ENCODE measurements at regions of chr12 and their contacts with region 1.

Region 1: GRCh38 chr12:6554168-6555017 is 1.4 kb downstream of the IFFO1 start:
- DNase-seq: peak; percentile 87
- H3K4me3 ChIP-seq: peak overlapping the region; percentile 93
- H3K27ac ChIP-seq: peak overlapping the region; percentile 66
- H3K4me1 ChIP-seq: peaks cover 41% of the 10 kb centered on the region
- H3K27me3 ChIP-seq: no peaks in the 10 kb centered on the region
- CTCF ChIP-seq: peak; percentile 67

Region 2: DNA sequence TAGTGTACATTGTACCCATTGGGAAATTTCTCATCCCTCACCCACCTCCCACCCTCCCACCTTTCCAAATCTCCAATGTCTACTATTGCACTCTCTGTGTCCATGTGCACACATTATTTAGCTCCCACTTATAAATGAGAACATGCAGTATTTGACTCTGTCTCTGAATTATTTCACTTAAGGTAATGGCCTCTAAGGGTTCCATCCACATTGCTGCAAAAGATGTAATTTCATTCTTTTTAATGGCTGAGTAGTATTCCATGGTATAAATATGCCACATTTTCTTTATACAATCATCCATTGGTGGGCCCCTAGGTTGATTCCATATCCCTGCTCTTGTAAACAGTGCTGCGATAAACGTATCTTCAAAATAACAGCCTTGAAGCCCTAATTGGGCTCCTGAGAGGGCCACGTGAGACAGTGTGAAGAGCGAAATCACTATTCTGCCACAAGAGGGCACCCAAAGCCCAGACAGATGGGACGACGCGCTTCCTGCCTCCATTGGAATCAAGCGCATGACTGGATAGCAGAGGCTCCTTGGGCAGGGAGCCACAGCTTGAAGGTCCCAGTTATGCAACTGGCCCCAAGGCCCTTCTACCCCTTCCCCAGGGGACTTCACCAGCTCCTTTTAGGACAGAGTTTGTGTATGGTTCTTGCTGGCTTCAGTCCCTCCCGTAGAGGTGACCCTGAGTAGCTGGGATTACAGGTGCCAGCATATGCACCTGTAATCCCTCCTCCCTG is 131.0 kb before region 1 on chr12:
- CTCF ChIA-PET with region 1: interaction called, 4 read pairs
- POLR2A ChIA-PET with region 1: no interaction called
- intact Hi-C with region 1: loop called (anchors 2 kb)
- DNase-seq: peak; percentile 96
- H3K4me3 ChIP-seq: no peak overlapping the region
- H3K27ac ChIP-seq: no peak overlapping the region
- H3K4me1 ChIP-seq: no peaks in the 10 kb centered on the region
- H3K27me3 ChIP-seq: no peaks in the 10 kb centered on the region
- CTCF ChIP-seq: peak; percentile 89

Region 3: GRCh38 chr12:6567112-6567670 is 12.8 kb after region 1 on chr12:
- CTCF ChIA-PET with region 1: no interaction called
- POLR2A ChIA-PET with region 1: no interaction called
- intact Hi-C with region 1: loop called (anchors 1 kb)
- DNase-seq: no peak
- H3K4me3 ChIP-seq: peak overlapping the region; percentile 75
- H3K27ac ChIP-seq: peak overlapping the region; percentile 81
- H3K4me1 ChIP-seq: peaks cover 10% of the 10 kb centered on the region
- H3K27me3 ChIP-seq: no peaks in the 10 kb centered on the region
- CTCF ChIP-seq: no peak

Region 4: DNA sequence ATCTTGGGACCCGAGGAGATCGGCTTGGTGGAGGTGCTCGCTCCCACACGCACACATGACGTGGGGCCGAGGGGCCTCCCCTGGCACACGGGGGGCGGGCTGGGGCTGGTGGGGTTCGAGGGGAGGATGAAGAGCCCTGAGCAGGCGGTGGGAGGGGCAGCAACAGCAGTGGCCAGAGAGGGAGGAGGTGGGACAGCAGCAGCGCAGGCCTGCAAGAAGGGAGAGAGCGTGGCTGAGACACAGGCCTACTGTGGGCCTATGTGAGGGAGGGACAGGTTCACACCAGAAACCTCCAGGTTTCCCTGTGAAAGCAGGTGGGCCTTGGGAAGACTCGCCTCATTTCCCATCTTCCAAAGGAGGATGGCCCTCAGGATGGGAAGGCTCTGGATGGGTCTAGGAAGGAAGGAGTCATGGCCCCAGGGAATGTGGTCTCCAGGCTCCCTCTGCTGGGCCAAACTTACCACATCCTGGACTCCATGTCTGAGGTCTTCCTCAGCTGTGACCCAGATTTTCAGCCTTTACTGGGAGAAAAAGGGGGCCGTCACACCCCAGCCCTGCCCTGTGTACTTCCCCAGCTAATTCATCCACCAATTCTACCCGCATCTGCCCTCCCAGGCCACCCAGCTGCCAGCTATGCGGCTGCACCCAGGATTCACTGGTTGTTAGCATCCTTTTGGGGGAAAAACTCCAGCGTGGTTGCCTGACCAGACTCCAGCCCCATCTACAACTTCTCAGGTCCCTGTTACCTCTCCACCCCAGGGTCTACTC is 143.4 kb after region 1 on chr12:
- CTCF ChIA-PET with region 1: interaction called, 4 read pairs
- POLR2A ChIA-PET with region 1: no interaction called
- intact Hi-C with region 1: loop called (anchors 5 kb)
- DNase-seq: peak; percentile 66
- H3K4me3 ChIP-seq: no peak overlapping the region
- H3K27ac ChIP-seq: no peak overlapping the region
- H3K4me1 ChIP-seq: peaks cover 7% of the 10 kb centered on the region
- H3K27me3 ChIP-seq: peaks cover 27% of the 10 kb centered on the region
- CTCF ChIP-seq: peak; percentile 65

Measured in A673 (cell line).